Activated CD4-positive, alpha-beta memory T cell treated with anti-CD3 and anti-CD28 coated beads for 36 hours (primary cell): ENCODE measurements at regions of chr12 and their contacts with region 1.

Region 1: DNA sequence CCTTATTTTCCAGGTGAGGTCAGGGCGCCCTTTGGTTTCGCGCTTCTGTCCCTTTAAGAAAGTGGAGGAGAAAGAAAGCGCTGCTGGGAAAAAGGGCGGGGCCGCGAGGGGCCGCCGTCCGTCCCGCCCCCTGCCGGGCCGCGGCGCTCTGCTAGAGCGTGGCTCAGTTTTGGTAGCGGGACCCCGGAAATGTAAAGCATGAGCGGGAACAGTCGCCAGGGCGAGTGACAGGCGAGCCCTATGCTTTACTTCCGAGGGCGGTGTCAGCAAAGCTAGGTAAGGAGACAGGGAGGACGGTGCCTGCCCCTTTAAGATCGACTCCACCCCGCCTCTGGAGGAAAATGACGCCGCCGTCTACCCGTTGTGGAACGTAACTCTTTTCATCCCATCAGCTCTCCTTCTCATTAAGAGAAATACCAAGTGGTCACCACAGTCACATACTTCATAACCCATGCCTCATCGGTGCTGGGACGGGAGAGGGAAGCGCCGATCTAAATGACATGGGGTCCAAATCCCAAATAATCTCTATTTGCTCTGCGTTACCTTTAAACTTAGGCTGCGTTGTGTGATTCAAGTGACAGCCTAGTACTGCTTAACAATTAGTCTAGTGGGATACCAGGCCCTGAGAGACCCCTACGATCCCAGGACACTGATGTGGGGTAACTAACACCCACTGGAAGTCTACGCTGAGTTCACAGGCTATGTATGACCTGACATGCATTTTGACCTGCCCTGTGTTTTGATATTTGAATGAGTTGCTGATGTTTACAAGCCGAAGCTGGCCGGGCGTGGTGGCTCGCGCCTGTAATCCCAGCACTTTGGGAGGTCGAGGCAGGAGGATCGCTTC is at the start of gene ETFBKMT:
- DNase-seq: peak; percentile 97
- H3K4me3 Mint-ChIP-seq: peak within 1 kb of the TSS; percentile 96
- H3K27ac Mint-ChIP-seq: peak within 1 kb of the TSS; percentile 95
- H3K4me1 Mint-ChIP-seq: peaks cover 7% of the 10 kb centered on the region
- H3K27me3 Mint-ChIP-seq: no peaks in the 10 kb centered on the region
- total RNA-seq, gene ETFBKMT: 1.1 to 1.3 TPM

Region 2: DNA sequence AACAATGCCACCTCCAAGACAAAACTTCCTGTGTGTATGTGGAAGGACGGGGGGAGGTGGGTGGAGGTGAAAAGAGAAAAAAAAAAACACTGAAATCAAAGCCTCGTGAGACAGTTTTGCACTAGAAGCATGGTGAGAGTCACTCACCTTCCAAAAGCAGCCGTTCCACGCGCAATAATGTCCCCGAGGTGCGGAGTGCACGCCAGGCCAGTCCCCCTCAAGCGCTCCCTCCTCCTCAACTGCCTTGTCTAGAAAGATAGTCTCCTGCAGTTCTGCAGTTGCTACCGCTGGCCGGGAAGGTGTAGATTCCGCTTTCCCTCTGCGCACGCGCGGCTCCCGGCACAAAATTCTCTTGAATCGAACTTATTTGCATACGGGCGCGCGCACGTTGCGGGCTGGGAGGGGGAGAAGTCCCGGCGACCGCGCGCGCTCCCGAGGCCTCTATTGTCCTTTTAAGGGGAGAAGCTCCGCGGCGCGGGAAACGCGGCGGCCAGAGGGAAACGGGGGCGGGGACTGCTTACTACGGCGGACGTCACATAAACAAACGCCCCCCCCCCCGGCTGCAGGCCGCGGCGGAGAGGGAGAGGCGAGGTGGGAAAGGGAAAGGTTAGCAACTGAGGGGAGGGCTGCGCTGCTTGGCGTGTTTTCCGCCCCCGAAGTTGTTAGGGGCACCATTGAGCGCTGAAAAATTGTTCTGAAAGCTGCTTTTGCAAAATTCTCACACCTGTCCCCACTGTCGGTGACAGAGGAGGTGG is 333.3 kb before region 1 on chr12 and contains the start of gene SINHCAF:
- CTCF ChIA-PET with region 1: interaction called, 5 read pairs
- POLR2A ChIA-PET with region 1: no interaction called
- intact Hi-C with region 1: loop called (anchors 1 kb)
- DNase-seq: peak; percentile 99
- H3K4me3 Mint-ChIP-seq: peak within 1 kb of the TSS; percentile 100
- H3K27ac Mint-ChIP-seq: peak within 1 kb of the TSS; percentile 99
- H3K4me1 Mint-ChIP-seq: peaks cover 24% of the 10 kb centered on the region
- H3K27me3 Mint-ChIP-seq: peaks cover 2% of the 10 kb centered on the region
- total RNA-seq, gene SINHCAF: 181 to 186 TPM

Region 3: DNA sequence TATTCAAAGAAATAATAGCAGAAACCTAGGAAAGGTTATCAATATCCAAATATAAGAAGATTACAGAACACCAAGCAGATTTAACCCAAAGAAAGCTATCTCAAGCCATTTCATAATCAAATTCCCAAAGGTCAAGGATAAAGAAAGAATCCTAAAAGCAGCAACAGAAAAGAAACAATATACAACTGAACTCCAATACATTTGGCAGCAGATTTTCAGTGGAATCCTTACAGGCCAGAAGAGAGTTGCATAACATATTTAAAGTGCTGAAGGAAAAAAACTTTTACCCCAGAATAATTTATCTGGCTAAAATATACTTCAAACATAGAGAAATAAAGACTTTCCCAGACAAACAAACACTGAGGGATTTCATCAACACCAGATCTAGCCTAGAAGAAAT is 122.6 kb before region 1 on chr12:
- CTCF ChIA-PET with region 1: no interaction called
- POLR2A ChIA-PET with region 1: no interaction called
- intact Hi-C with region 1: no loop called
- DNase-seq: no peak
- H3K4me3 Mint-ChIP-seq: no peak overlapping the region
- H3K27ac Mint-ChIP-seq: no peak overlapping the region
- H3K4me1 Mint-ChIP-seq: no peaks in the 10 kb centered on the region
- H3K27me3 Mint-ChIP-seq: peaks cover 8% of the 10 kb centered on the region

Region 4: GRCh38 chr12:31728917-31729640 is 69.8 kb after region 1 on chr12 and contains the start of gene AMN1:
- CTCF ChIA-PET with region 1: interaction called, 6 read pairs
- POLR2A ChIA-PET with region 1: interaction called, 4 read pairs
- intact Hi-C with region 1: loop called (anchors 1 kb)
- DNase-seq: peak; percentile 100
- H3K4me3 Mint-ChIP-seq: peak within 1 kb of the TSS; percentile 96
- H3K27ac Mint-ChIP-seq: peak within 1 kb of the TSS; percentile 97
- H3K4me1 Mint-ChIP-seq: peaks cover 41% of the 10 kb centered on the region
- H3K27me3 Mint-ChIP-seq: no peaks in the 10 kb centered on the region
- total RNA-seq, gene AMN1: 3.2 to 4.7 TPM

Region 5: GRCh38 chr12:31736472-31736871 is 77.2 kb after region 1 on chr12:
- CTCF ChIA-PET with region 1: interaction called, 6 read pairs
- POLR2A ChIA-PET with region 1: no interaction called
- intact Hi-C with region 1: loop called (anchors 1 kb)
- DNase-seq: peak; percentile 84
- H3K4me3 Mint-ChIP-seq: no peak overlapping the region
- H3K27ac Mint-ChIP-seq: peak overlapping the region; percentile 74
- H3K4me1 Mint-ChIP-seq: peaks cover 56% of the 10 kb centered on the region
- H3K27me3 Mint-ChIP-seq: no peaks in the 10 kb centered on the region

Region 6: GRCh38 chr12:32106517-32107358 is 447.4 kb after region 1 on chr12 and contains the start of gene BICD1:
- CTCF ChIA-PET with region 1: no interaction called
- POLR2A ChIA-PET with region 1: interaction called, 5 read pairs
- intact Hi-C with region 1: loop called (anchors 2 kb)
- DNase-seq: peak; percentile 85
- H3K4me3 Mint-ChIP-seq: peak within 1 kb of the TSS; percentile 87
- H3K27ac Mint-ChIP-seq: peak within 1 kb of the TSS; percentile 82
- H3K4me1 Mint-ChIP-seq: peaks cover 23% of the 10 kb centered on the region
- H3K27me3 Mint-ChIP-seq: no peaks in the 10 kb centered on the region
- total RNA-seq, gene BICD1: 10.5 to 10.7 TPM

Region 7: GRCh38 chr12:32679091-32679919 is 1020.0 kb after region 1 on chr12 and contains the start of gene DNM1L:
- CTCF ChIA-PET with region 1: no interaction called
- POLR2A ChIA-PET with region 1: no interaction called
- intact Hi-C with region 1: loop called (anchors 1 kb)
- DNase-seq: peak; percentile 94
- H3K4me3 Mint-ChIP-seq: peak within 1 kb of the TSS; percentile 87
- H3K27ac Mint-ChIP-seq: peak within 1 kb of the TSS; percentile 85
- H3K4me1 Mint-ChIP-seq: peaks cover 15% of the 10 kb centered on the region
- H3K27me3 Mint-ChIP-seq: no peaks in the 10 kb centered on the region
- total RNA-seq, gene DNM1L: 59.0 to 62.5 TPM